ENCODE measurements at regions of chr16 and their contacts with region 1.

Region 1: DNA sequence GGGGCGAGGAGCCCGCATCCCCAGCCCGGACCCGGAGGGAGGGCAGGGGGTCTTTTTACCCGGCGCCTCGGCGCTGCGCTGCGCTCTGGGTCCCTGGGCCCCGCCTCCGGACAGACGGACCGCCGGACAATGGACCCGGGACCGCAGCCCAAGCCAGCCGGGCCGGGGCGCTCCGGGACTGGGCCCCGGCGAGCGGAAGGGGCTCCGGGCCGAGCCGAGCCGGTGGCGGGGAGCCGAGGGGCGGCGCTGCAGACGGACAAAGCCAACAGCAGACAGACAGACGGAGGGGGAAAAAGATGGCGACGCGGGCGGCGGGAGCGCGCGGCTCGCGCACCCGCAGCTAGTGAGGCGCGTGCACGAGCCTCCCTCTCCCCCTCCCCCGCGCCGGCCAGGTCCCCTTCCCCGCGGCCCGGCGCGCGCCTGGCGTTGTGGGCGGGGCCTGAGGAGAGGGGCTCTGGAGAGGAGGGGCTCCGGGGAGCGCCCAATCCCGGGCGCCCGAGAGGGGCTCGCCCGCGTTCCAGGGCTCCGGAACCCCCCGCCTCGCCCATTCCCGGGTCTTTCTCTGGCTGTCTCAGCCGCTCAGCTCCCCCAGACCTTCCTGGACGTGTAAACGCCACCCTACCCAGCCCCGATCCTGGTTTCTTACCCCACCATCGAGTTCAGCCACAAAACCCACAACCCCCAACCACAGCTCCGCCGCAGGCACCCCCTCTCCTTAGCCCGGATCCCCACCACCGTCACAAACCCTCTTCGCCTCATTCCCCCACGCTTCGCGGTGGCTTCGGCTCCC is at the start of gene ZNF821:
- DNase-seq: peak; percentile 48 to 92 (median 72)
- ATAC-seq: peak; percentile 48
- H3K4me3 ChIP-seq: peak within 1 kb of the TSS; percentile 80 to 81
- H3K4me3 Mint-ChIP-seq: peak within 1 kb of the TSS; percentile 94
- H3K27ac ChIP-seq: peak within 1 kb of the TSS; percentile 47 to 83
- H3K27ac Mint-ChIP-seq: peak within 1 kb of the TSS; percentile 95
- H3K4me1 ChIP-seq: peaks cover 39% of the 10 kb centered on the region
- H3K4me1 Mint-ChIP-seq: peaks cover 51% of the 10 kb centered on the region
- H3K27me3 ChIP-seq: no peaks in the 10 kb centered on the region
- H3K27me3 Mint-ChIP-seq: no peaks in the 10 kb centered on the region
- CTCF ChIP-seq: no peak
- total RNA-seq, gene ZNF821: 8.4 to 10.1 TPM

Region 2: GRCh38 chr16:71767060-71767900 is 116.8 kb before region 1 on chr16:
- CTCF ChIA-PET with region 1: interaction called, 3 read pairs
- POLR2A ChIA-PET with region 1: no interaction called
- intact Hi-C with region 1: loop called in 1 of 2 experiments (anchors 5 kb)
- DNase-seq: no peak
- ATAC-seq: no peak
- H3K4me3 ChIP-seq: no peak overlapping the region
- H3K4me3 Mint-ChIP-seq: no peak overlapping the region
- H3K27ac ChIP-seq: no peak overlapping the region
- H3K27ac Mint-ChIP-seq: peak overlapping the region; percentile 12
- H3K4me1 ChIP-seq: no peaks in the 10 kb centered on the region
- H3K4me1 Mint-ChIP-seq: peaks cover 8% of the 10 kb centered on the region
- H3K27me3 ChIP-seq: no peaks in the 10 kb centered on the region
- H3K27me3 Mint-ChIP-seq: no peaks in the 10 kb centered on the region
- CTCF ChIP-seq: no peak

Region 3: GRCh38 chr16:71808593-71809459 is 75.2 kb before region 1 on chr16 and contains the start of gene AP1G1:
- CTCF ChIA-PET with region 1: interaction called, 36 read pairs
- POLR2A ChIA-PET with region 1: interaction called, 65 read pairs
- intact Hi-C with region 1: loop called (anchors 1 to 2 kb)
- DNase-seq: peak; percentile 87 to 99 (median 93)
- ATAC-seq: peak; percentile 89
- H3K4me3 ChIP-seq: peak within 1 kb of the TSS; percentile 95
- H3K4me3 Mint-ChIP-seq: peak within 1 kb of the TSS; percentile 95
- H3K27ac ChIP-seq: peak within 1 kb of the TSS; percentile 98
- H3K27ac Mint-ChIP-seq: peak within 1 kb of the TSS; percentile 99
- H3K4me1 ChIP-seq: peaks cover 26% of the 10 kb centered on the region
- H3K4me1 Mint-ChIP-seq: peaks cover 40% of the 10 kb centered on the region
- H3K27me3 ChIP-seq: no peaks in the 10 kb centered on the region
- H3K27me3 Mint-ChIP-seq: no peaks in the 10 kb centered on the region
- CTCF ChIP-seq: no peak
- total RNA-seq, gene AP1G1: 179 to 202 TPM

Region 4: DNA sequence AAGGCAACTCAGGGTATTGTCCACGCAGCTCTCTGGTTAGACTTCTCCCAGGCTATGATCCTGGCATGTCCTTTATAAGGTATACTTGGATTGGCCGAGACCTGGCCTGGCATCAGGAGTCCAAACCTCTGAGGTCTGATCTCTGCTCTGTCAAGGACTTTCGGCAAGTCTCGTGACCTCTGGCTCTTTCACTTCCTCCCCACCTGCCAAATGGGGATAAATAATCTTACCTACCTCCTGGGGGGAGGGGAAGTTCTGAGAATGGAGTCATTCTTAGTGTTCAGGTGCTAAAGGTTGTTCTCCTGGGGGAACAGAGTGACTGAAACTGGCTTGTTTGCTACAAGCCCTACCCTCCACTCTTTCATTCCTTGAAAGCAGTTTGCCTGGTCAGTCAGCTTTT is 30.6 kb before region 1 on chr16:
- CTCF ChIA-PET with region 1: interaction called, 51 read pairs
- POLR2A ChIA-PET with region 1: interaction called, 46 read pairs
- intact Hi-C with region 1: no loop called
- DNase-seq: no peak
- ATAC-seq: no peak
- H3K4me3 ChIP-seq: no peak overlapping the region
- H3K4me3 Mint-ChIP-seq: no peak overlapping the region
- H3K27ac ChIP-seq: peak overlapping the region in 1 of 2 experiments; percentile 71
- H3K27ac Mint-ChIP-seq: peak overlapping the region; percentile 47
- H3K4me1 ChIP-seq: peaks cover 31% of the 10 kb centered on the region
- H3K4me1 Mint-ChIP-seq: peaks cover 64% of the 10 kb centered on the region
- H3K27me3 ChIP-seq: no peaks in the 10 kb centered on the region
- H3K27me3 Mint-ChIP-seq: no peaks in the 10 kb centered on the region
- CTCF ChIP-seq: no peak

Region 5: DNA sequence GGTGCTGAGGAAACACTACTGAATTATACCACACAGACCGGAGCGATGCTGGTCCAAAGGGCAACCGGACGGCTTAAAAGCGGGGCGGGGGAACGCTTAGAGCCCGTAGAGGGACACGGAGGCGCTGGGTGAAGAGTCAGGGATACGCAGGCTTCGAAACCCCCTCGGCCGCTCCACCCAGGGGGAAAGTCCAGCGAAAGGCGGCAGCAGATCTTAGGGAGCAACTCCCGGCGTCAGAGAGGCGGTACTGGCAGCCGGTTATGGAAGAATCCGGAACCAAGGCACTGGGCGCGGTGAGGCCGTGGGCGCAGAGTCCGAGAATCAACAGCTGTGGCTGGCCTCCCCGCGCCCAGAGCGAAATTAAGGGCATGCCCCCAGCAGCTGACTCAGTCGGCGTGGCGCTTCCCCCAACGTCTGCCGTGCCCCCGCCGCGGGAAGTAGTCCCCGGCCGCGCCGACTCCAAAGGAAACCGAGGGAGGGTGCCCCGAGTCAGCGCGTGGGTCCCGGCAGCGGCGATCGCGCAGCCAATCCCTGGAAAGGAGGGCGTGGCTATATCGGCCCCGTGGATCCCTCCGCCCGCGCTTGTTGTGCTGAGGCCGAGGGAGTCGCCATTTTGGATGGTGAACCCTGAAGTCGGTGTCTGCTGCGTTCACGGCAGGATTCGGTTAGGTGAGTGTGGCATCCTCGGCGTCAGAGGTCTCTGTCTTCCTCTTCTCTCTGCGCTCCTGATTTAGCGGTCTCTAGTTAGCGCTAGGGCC is 11.1 kb after region 1 on chr16 and contains the start of gene IST1:
- CTCF ChIA-PET with region 1: interaction called, 69 read pairs
- POLR2A ChIA-PET with region 1: interaction called, 58 read pairs
- intact Hi-C with region 1: loop called (anchors 1 kb)
- DNase-seq: peak; percentile 95 to 99 (median 98)
- ATAC-seq: peak; percentile 94
- H3K4me3 ChIP-seq: peak within 1 kb of the TSS; percentile 98 to 99
- H3K4me3 Mint-ChIP-seq: peak within 1 kb of the TSS; percentile 97
- H3K27ac ChIP-seq: peak within 1 kb of the TSS; percentile 97
- H3K27ac Mint-ChIP-seq: peak within 1 kb of the TSS; percentile 97
- H3K4me1 ChIP-seq: peaks cover 34% of the 10 kb centered on the region
- H3K4me1 Mint-ChIP-seq: peaks cover 32% of the 10 kb centered on the region
- H3K27me3 ChIP-seq: no peaks in the 10 kb centered on the region
- H3K27me3 Mint-ChIP-seq: no peaks in the 10 kb centered on the region
- CTCF ChIP-seq: no peak
- total RNA-seq, gene IST1: 460 to 476 TPM

Region 6: GRCh38 chr16:71995038-71995437 is 111.0 kb after region 1 on chr16:
- CTCF ChIA-PET with region 1: no interaction called
- POLR2A ChIA-PET with region 1: no interaction called
- intact Hi-C with region 1: no loop called
- DNase-seq: no peak
- ATAC-seq: no peak
- H3K4me3 ChIP-seq: no peak overlapping the region
- H3K4me3 Mint-ChIP-seq: no peak overlapping the region
- H3K27ac ChIP-seq: no peak overlapping the region
- H3K27ac Mint-ChIP-seq: no peak overlapping the region
- H3K4me1 ChIP-seq: no peaks in the 10 kb centered on the region
- H3K4me1 Mint-ChIP-seq: no peaks in the 10 kb centered on the region
- H3K27me3 ChIP-seq: no peaks in the 10 kb centered on the region
- H3K27me3 Mint-ChIP-seq: peaks cover 25% of the 10 kb centered on the region
- CTCF ChIP-seq: no peak

Region 7: DNA sequence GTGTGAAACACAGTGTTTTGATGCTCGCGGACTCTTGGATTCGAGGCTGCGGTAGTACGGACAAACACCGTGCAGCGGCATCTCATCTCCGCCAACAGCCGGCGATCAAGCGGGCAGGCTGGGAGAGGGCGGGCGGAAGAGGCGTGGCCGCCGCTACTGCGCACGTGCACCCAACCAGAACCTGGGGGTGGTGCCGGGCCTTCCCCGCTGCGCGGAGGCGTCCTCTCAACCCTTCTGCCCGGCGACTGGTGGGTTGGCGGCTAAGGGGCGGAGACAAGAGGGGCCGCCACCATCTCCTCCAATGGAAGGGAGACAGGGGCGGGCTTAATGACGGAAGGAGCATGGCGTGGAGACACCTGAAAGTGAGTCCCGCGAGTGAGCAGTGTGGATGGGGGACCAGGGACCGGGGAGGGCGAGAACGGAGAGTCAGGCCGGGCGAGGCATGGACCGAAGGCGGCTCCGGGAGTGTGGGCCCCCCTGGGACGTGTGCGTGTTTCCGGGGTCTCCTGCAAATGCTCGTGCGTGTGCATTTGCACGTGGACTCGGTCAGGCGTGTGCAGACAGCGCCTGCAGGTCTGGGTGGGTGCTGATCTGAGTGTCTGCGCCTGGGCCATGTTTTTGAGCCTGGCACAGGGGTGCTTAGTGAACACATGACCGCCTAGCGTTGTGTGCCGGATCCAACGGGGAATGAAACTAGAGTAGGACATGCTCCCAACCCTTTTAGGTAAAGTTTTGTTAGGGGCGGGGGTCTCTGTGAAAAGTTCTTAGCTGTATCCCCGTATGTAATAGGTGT is 124.6 kb after region 1 on chr16 and contains the start of gene DHODH:
- CTCF ChIA-PET with region 1: no interaction called
- POLR2A ChIA-PET with region 1: no interaction called
- intact Hi-C with region 1: loop called in 1 of 2 experiments (anchors 2 kb)
- DNase-seq: peak; percentile 94 to 99 (median 97)
- ATAC-seq: peak; percentile 98
- H3K4me3 ChIP-seq: peak within 1 kb of the TSS; percentile 87 to 90
- H3K4me3 Mint-ChIP-seq: peak within 1 kb of the TSS; percentile 91
- H3K27ac ChIP-seq: peak within 1 kb of the TSS; percentile 41 to 66
- H3K27ac Mint-ChIP-seq: peak within 1 kb of the TSS; percentile 76
- H3K4me1 ChIP-seq: no peaks in the 10 kb centered on the region
- H3K4me1 Mint-ChIP-seq: peaks cover 20% of the 10 kb centered on the region
- H3K27me3 ChIP-seq: no peaks in the 10 kb centered on the region
- H3K27me3 Mint-ChIP-seq: no peaks in the 10 kb centered on the region
- CTCF ChIP-seq: no peak
- total RNA-seq, gene DHODH: 2.4 to 3.0 TPM